WTC11 (cell line): ENCODE measurements at regions of chr6 and their contacts with region 1.

Region 1: GRCh38 chr6:150079604-150080003 is 10.7 kb upstream of the ULBP3 start:
- DNase-seq: no peak
- ATAC-seq: peak; percentile 73
- H3K4me3 Mint-ChIP-seq: no peak overlapping the region
- H3K27ac Mint-ChIP-seq: no peak overlapping the region
- H3K4me1 Mint-ChIP-seq: peaks cover 11% of the 10 kb centered on the region; the same call in 1 of the 2 replicates
- H3K27me3 Mint-ChIP-seq: peaks cover 7% of the 10 kb centered on the region; the same call in 1 of the 2 replicates
- CTCF ChIP-seq: no peak

Region 2: GRCh38 chr6:150068720-150069648 is 10.6 kb before region 1 on chr6 and contains the start of gene ULBP3:
- CTCF ChIA-PET with region 1: interaction called, 77 read pairs
- POLR2A ChIA-PET with region 1: interaction called, 3 read pairs
- DNase-seq: peak; percentile 83
- ATAC-seq: peak; percentile 90
- H3K4me3 Mint-ChIP-seq: peak within 1 kb of the TSS; percentile 74
- H3K27ac Mint-ChIP-seq: no peak within 1 kb of the TSS
- H3K4me1 Mint-ChIP-seq: peaks cover 12% of the 10 kb centered on the region
- H3K27me3 Mint-ChIP-seq: peaks cover 40% of the 10 kb centered on the region
- CTCF ChIP-seq: no peak
- total RNA-seq, gene ULBP3: 4.0 to 6.0 TPM (median 5.6 TPM) in 3 replicates

Region 3: GRCh38 chr6:150098155-150098554 is 18.6 kb after region 1 on chr6:
- CTCF ChIA-PET with region 1: interaction called, 19 read pairs
- POLR2A ChIA-PET with region 1: no interaction called
- DNase-seq: no peak
- ATAC-seq: no peak
- H3K4me3 Mint-ChIP-seq: no peak overlapping the region
- H3K27ac Mint-ChIP-seq: no peak overlapping the region
- H3K4me1 Mint-ChIP-seq: no peaks in the 10 kb centered on the region
- H3K27me3 Mint-ChIP-seq: no peaks in the 10 kb centered on the region; the same call in 1 of the 2 replicates
- CTCF ChIP-seq: no peak

Region 4: GRCh38 chr6:150180517-150180916 is 100.9 kb after region 1 on chr6:
- CTCF ChIA-PET with region 1: interaction called, 20 read pairs
- POLR2A ChIA-PET with region 1: no interaction called
- DNase-seq: no peak
- ATAC-seq: no peak
- H3K4me3 Mint-ChIP-seq: no peak overlapping the region
- H3K27ac Mint-ChIP-seq: no peak overlapping the region
- H3K4me1 Mint-ChIP-seq: no peaks in the 10 kb centered on the region
- H3K27me3 Mint-ChIP-seq: no peaks in the 10 kb centered on the region
- CTCF ChIP-seq: no peak

Region 5: GRCh38 chr6:150251566-150252186 is 172.1 kb after region 1 on chr6:
- CTCF ChIA-PET with region 1: no interaction called
- POLR2A ChIA-PET with region 1: no interaction called
- DNase-seq: no peak
- ATAC-seq: no peak
- H3K4me3 Mint-ChIP-seq: no peak overlapping the region
- H3K27ac Mint-ChIP-seq: no peak overlapping the region
- H3K4me1 Mint-ChIP-seq: peaks cover 16% of the 10 kb centered on the region
- H3K27me3 Mint-ChIP-seq: peaks cover 12% of the 10 kb centered on the region
- CTCF ChIP-seq: no peak

Region 6: GRCh38 chr6:150334790-150335783 is 255.5 kb after region 1 on chr6:
- CTCF ChIA-PET with region 1: interaction called, 28 read pairs
- POLR2A ChIA-PET with region 1: no interaction called
- DNase-seq: peak; percentile 47
- ATAC-seq: no peak
- H3K4me3 Mint-ChIP-seq: no peak overlapping the region
- H3K27ac Mint-ChIP-seq: no peak overlapping the region
- H3K4me1 Mint-ChIP-seq: 0 out of 2 replicates have a peak, but pooled peaks cover 3% of the 10 kb centered on the region
- H3K27me3 Mint-ChIP-seq: no peaks in the 10 kb centered on the region; the same call in 1 of the 2 replicates
- CTCF ChIP-seq: peak; percentile 61